Motor neuron (in vitro differentiated cells): ENCODE measurements at regions of chr7 and their contacts with region 1.

Region 1: GRCh38 chr7:7438851-7439250 is 96.8 kb downstream of the COL28A1 start:
- ATAC-seq: peak; percentile 49 to 100 (median 70)
- H3K4me3 ChIP-seq: no peak overlapping the region
- H3K27ac ChIP-seq: no peak overlapping the region
- H3K4me1 ChIP-seq: no peaks in the 10 kb centered on the region

Region 2: GRCh38 chr7:7251742-7252141 is 187.1 kb before region 1 on chr7:
- in situ Hi-C with region 1: no loop called
- ATAC-seq: no peak
- H3K4me3 ChIP-seq: no peak overlapping the region
- H3K27ac ChIP-seq: no peak overlapping the region
- H3K4me1 ChIP-seq: no peaks in the 10 kb centered on the region

Region 3: GRCh38 chr7:7529328-7529727 is 90.5 kb after region 1 on chr7:
- in situ Hi-C with region 1: loop called in 2 of 9 experiments (anchors 25 kb)
- ATAC-seq: peak in 3 of 8 experiments; percentile 16 to 81 (median 71)
- H3K4me3 ChIP-seq: no peak overlapping the region
- H3K27ac ChIP-seq: no peak overlapping the region
- H3K4me1 ChIP-seq: no peaks in the 10 kb centered on the region